Ovary (tissue), 10 donors: ENCODE measurements at regions of chr15 and their contacts with region 1.

Region 1: GRCh38 chr15:60326824-60327654 is 70.7 kb downstream of the ANXA2 start:
- DNase-seq: no peak
- H3K4me3 ChIP-seq: no peak overlapping the region
- H3K27ac ChIP-seq: no peak overlapping the region
- H3K4me1 ChIP-seq: no peaks in the 10 kb centered on the region
- H3K27me3 ChIP-seq: no peaks in the 10 kb centered on the region
- CTCF ChIP-seq: peak; percentile 55 to 71 (median 62)
- EP300 ChIP-seq: no peak
- POLR2A ChIP-seq: no peak

Region 2: GRCh38 chr15:59689626-59690236 is 637.3 kb before region 1 on chr15:
- intact Hi-C with region 1: loop called in 1 of 4 experiments (anchors 10 kb)
- DNase-seq: peak; percentile 73 to 86 (median 80)
- H3K4me3 ChIP-seq: peak overlapping the region; percentile 96
- H3K27ac ChIP-seq: peak overlapping the region; percentile 79 to 86
- H3K4me1 ChIP-seq: peaks cover 6% of the 10 kb centered on the region
- H3K27me3 ChIP-seq: no peaks in the 10 kb centered on the region
- CTCF ChIP-seq: no peak
- EP300 ChIP-seq: no peak
- POLR2A ChIP-seq: no peak

Region 3: GRCh38 chr15:59723687-59724346 is 603.2 kb before region 1 on chr15:
- intact Hi-C with region 1: loop called in 1 of 4 experiments (anchors 5 kb)
- DNase-seq: no peak
- H3K4me3 ChIP-seq: no peak overlapping the region
- H3K27ac ChIP-seq: no peak overlapping the region
- H3K4me1 ChIP-seq: no peaks in the 10 kb centered on the region
- H3K27me3 ChIP-seq: no peaks in the 10 kb centered on the region
- CTCF ChIP-seq: no peak
- EP300 ChIP-seq: no peak
- POLR2A ChIP-seq: no peak